PC-3 (cell line): ENCODE measurements at regions of chr10 and their contacts with region 1.

Region 1: GRCh38 chr10:74924251-74924951 is 98.0 kb downstream of the KAT6B start:
- DNase-seq: peak; percentile 100
- ATAC-seq: peak; percentile 67
- H3K4me3 ChIP-seq: peak overlapping the region; percentile 49
- H3K27ac ChIP-seq: peak overlapping the region; percentile 78
- H3K4me1 ChIP-seq: peaks cover 90% of the 10 kb centered on the region
- H3K27me3 ChIP-seq: no peaks in the 10 kb centered on the region
- CTCF ChIP-seq: no peak

Region 2: DNA sequence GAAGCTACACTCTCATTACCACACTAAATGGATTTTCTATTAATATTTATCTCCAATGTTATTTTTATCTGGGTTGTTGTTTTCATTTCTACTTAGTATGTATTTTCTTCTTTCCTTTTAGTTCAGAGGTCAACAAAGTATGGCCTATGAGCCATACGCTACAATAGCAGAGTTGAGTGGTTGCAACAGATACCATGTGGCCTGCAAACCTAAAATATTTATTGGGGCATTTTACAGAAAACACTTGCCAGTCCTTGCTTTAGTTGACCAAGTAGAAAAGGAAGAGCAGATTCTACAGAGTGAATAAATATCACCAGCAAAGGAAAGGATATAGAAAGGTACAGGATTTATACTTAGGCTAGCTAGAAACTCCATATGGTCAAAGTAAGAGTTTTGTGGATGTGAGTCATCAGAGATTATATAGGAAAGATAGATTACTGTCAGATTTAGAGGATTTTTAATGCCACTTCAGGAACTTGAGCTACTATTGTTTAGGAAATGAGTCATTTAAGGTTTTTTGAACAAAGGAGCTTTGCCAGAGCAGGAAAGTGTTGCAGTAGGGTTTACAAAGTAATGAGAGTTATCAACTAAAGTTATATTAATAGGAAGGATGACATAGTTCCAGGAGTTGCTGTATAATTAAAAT is 421.3 kb before region 1 on chr10:
- CTCF ChIA-PET with region 1: no interaction called
- POLR2A ChIA-PET with region 1: no interaction called
- intact Hi-C with region 1: loop called (anchors 5 kb)
- DNase-seq: peak; percentile 100
- ATAC-seq: peak; percentile 88
- H3K4me3 ChIP-seq: 0 out of 2 replicates have a peak overlapping the region, but pooled peaks have one; percentile 1
- H3K27ac ChIP-seq: peak overlapping the region; percentile 69
- H3K4me1 ChIP-seq: peaks cover 44% of the 10 kb centered on the region
- H3K27me3 ChIP-seq: no peaks in the 10 kb centered on the region
- CTCF ChIP-seq: no peak

Region 3: DNA sequence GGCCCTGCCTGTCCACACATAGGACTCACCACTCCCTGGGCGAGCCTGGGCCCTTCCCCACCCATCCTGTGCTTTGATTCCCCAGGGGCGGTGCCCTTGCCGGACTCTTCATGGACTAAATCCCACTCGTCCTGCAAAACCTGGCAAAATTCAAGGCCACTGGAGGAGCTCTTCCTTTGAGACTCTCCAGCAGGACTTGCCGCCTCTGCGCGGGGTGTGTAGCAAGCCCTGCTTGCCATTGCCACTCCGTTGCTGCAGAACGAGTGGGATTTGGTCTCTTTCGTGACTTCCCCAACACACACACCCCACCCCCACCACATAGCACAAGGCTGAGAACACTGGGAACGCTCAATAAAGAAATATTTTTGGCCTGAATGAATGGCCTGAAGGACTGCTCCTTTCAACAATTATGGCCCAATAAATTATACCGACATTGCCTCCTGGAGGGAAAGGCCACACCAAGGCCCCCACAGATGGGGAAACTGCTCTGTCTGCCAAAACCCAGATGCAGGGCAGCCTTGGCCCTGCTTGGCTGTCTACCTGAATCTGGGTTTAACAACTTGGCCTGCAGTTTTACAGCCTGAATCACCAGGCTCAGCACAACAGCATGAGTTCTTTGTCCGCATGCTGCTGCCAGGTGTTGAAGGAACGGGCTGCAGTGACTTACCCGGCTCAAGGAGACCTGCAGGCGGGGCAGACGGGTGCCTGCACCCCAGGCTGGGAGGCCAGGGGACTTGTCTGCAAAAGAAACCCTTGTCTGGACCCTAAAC is 170.8 kb before region 1 on chr10:
- CTCF ChIA-PET with region 1: interaction called, 4 read pairs
- POLR2A ChIA-PET with region 1: no interaction called
- intact Hi-C with region 1: loop called (anchors 1 kb)
- DNase-seq: peak; percentile 100
- ATAC-seq: peak; percentile 86
- H3K4me3 ChIP-seq: peak overlapping the region; percentile 30
- H3K27ac ChIP-seq: peak overlapping the region; percentile 82
- H3K4me1 ChIP-seq: peaks cover 25% of the 10 kb centered on the region
- H3K27me3 ChIP-seq: no peaks in the 10 kb centered on the region
- CTCF ChIP-seq: peak; percentile 51

Region 4: GRCh38 chr10:74867351-74867750 is 57.0 kb before region 1 on chr10:
- CTCF ChIA-PET with region 1: no interaction called
- POLR2A ChIA-PET with region 1: no interaction called
- intact Hi-C with region 1: no loop called
- DNase-seq: no peak
- ATAC-seq: no peak
- H3K4me3 ChIP-seq: no peak overlapping the region
- H3K27ac ChIP-seq: no peak overlapping the region
- H3K4me1 ChIP-seq: no peaks in the 10 kb centered on the region
- H3K27me3 ChIP-seq: no peaks in the 10 kb centered on the region
- CTCF ChIP-seq: no peak

Region 5: DNA sequence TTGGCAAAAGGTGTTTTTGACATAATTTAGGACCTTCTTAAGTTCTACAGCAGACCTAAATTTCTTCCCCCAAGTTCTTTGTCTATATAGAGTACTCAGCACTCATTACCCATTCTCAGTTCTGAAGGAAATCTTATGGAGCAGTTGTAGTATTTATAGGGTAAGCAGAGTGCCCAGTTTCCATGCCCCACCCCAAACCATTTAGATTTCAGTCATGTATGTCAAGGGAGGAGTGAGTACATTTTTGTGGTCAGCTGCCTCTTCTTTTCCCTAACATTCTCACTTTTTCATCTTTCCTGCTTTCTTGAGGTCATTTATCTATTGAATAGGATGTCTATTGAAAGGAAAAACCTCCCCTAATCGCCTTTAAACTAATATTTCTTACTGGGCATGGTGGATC is 14.7 kb before region 1 on chr10:
- CTCF ChIA-PET with region 1: no interaction called
- POLR2A ChIA-PET with region 1: no interaction called
- intact Hi-C with region 1: loop called (anchors 1 kb)
- DNase-seq: peak; percentile 96
- ATAC-seq: peak; percentile 94
- H3K4me3 ChIP-seq: no peak overlapping the region
- H3K27ac ChIP-seq: peak overlapping the region; percentile 6
- H3K4me1 ChIP-seq: peaks cover 19% of the 10 kb centered on the region
- H3K27me3 ChIP-seq: no peaks in the 10 kb centered on the region
- CTCF ChIP-seq: no peak

Region 6: GRCh38 chr10:74953214-74953613 is 28.8 kb after region 1 on chr10:
- CTCF ChIA-PET with region 1: no interaction called
- POLR2A ChIA-PET with region 1: no interaction called
- intact Hi-C with region 1: loop called (anchors 1 kb)
- DNase-seq: peak; percentile 89
- ATAC-seq: peak; percentile 70
- H3K4me3 ChIP-seq: peak overlapping the region; percentile 0; the same call in 1 of the 2 replicates
- H3K27ac ChIP-seq: peak overlapping the region; percentile 1; the same call in 1 of the 2 replicates
- H3K4me1 ChIP-seq: peaks cover 45% of the 10 kb centered on the region
- H3K27me3 ChIP-seq: no peaks in the 10 kb centered on the region
- CTCF ChIP-seq: no peak

Region 7: GRCh38 chr10:74994854-74995253 is 70.5 kb after region 1 on chr10:
- CTCF ChIA-PET with region 1: no interaction called
- POLR2A ChIA-PET with region 1: no interaction called
- intact Hi-C with region 1: loop called (anchors 1 kb)
- DNase-seq: peak; percentile 78
- ATAC-seq: peak; percentile 83
- H3K4me3 ChIP-seq: no peak overlapping the region
- H3K27ac ChIP-seq: 0 out of 2 replicates have a peak overlapping the region, but pooled peaks have one; percentile 0
- H3K4me1 ChIP-seq: peaks cover 14% of the 10 kb centered on the region
- H3K27me3 ChIP-seq: no peaks in the 10 kb centered on the region
- CTCF ChIP-seq: no peak